Activated CD8-positive, alpha-beta memory T cell treated with anti-CD3 and anti-CD28 coated beads, Interleukin-2, amount 10 ng/mL, durations not matched to agents 7 days and 5 days (primary cell): ENCODE measurements at regions of chr2 and their contacts with region 1.

Region 1: DNA sequence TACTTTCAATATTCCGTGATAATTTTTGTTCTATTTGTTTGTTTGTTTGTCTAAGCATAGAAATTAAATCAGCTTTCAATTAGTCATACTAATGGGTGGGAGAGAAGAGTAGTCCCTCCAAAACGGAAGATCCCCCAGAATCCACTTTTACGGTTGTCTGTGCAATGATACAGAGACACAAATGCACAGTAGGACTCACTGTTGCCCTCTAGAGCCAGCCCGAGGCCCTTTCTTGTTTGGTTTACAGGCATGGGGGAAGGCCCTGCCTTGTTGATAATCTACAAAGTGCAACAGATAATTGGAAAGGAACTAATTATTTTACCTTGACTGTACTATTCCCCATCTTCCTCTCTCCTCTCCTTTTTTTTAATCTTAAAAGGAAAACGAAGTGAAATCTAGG is 121.1 kb downstream of the ACOXL start:
- DNase-seq: peak; percentile 83
- ATAC-seq: peak; percentile 50
- H3K4me3 Mint-ChIP-seq: no peak overlapping the region
- H3K27ac Mint-ChIP-seq: peak overlapping the region; percentile 82
- H3K4me1 Mint-ChIP-seq: peaks cover 75% of the 10 kb centered on the region
- H3K27me3 Mint-ChIP-seq: peaks cover 47% of the 10 kb centered on the region

Region 2: GRCh38 chr2:110688594-110689091 is 164.9 kb before region 1 on chr2:
- CTCF ChIA-PET with region 1: no interaction called
- DNase-seq: no peak
- ATAC-seq: no peak
- H3K4me3 Mint-ChIP-seq: no peak overlapping the region
- H3K27ac Mint-ChIP-seq: no peak overlapping the region
- H3K4me1 Mint-ChIP-seq: no peaks in the 10 kb centered on the region
- H3K27me3 Mint-ChIP-seq: peaks cover 26% of the 10 kb centered on the region

Region 3: DNA sequence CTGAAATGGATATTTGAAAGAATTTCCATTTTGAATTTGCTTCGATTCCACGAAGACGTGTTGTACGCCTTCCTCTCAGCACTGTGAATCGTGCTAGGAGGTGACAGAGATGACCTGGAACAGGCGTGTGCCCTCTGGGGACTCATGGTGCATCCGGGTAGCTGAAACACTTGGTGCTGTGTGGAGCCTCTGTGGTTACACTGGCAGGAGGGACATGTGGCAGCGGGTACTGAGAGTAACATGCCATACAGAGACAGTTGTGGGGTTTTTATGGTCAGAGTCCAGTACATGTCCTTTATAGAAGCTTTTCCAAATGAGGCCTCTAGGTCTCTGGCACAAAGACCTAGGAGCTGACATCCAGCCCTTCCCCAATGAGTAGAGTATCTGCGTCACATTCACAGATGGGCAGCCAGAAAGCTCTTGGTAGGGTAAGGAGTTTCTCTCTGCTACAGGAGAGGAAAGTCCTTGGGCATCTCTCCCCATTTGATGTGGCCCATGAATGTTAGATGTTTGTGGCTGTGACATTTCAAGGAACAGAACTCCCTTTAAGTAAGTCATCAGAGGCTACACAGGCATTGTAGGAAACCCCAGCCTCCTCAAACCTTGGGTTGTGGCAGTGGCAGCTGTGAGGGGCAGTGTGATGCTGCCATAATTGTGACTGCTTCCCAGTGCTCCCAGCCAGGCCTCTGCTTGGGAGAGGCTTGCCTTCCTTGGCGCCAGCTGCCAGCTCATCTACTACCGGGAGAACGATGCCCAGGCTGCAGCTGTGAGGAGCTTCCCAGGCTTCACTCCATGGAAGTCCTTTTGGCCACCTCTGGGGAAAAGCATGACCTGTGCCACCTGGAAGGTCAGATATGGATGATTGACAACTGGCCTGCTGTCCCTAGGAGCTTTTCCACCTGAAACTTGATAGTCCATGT is 40.5 kb before region 1 on chr2:
- CTCF ChIA-PET with region 1: interaction called, 35 read pairs
- DNase-seq: no peak
- ATAC-seq: no peak
- H3K4me3 Mint-ChIP-seq: no peak overlapping the region
- H3K27ac Mint-ChIP-seq: no peak overlapping the region
- H3K4me1 Mint-ChIP-seq: peaks cover 5% of the 10 kb centered on the region
- H3K27me3 Mint-ChIP-seq: peaks cover 58% of the 10 kb centered on the region

Region 4: GRCh38 chr2:110828330-110828729 is 25.2 kb before region 1 on chr2:
- CTCF ChIA-PET with region 1: no interaction called
- DNase-seq: no peak
- ATAC-seq: no peak
- H3K4me3 Mint-ChIP-seq: no peak overlapping the region
- H3K27ac Mint-ChIP-seq: no peak overlapping the region
- H3K4me1 Mint-ChIP-seq: peaks cover 2% of the 10 kb centered on the region
- H3K27me3 Mint-ChIP-seq: peaks cover 55% of the 10 kb centered on the region

Region 5: DNA sequence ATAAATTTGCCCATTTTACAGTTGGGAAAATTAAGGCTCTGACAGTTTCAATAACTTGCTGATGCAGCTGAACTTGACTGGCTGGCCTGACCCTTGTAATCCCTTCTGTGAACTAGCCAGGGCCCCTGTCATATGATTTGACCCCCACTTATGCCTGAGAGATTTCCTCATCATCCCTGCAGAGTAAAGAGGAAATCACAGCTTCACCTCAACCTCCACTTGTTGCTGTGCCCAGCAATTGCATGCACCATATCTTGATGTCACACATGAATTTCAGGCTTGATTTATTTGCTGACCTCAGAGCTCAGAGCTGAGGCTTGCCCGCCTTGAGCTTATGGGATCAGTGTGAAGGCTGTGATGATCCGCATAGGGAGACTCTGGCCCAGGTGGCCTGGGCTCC is 13.0 kb before region 1 on chr2:
- CTCF ChIA-PET with region 1: interaction called, 10 read pairs
- DNase-seq: no peak
- ATAC-seq: no peak
- H3K4me3 Mint-ChIP-seq: no peak overlapping the region
- H3K27ac Mint-ChIP-seq: no peak overlapping the region
- H3K4me1 Mint-ChIP-seq: peaks cover 19% of the 10 kb centered on the region
- H3K27me3 Mint-ChIP-seq: peaks cover 47% of the 10 kb centered on the region

Region 6: DNA sequence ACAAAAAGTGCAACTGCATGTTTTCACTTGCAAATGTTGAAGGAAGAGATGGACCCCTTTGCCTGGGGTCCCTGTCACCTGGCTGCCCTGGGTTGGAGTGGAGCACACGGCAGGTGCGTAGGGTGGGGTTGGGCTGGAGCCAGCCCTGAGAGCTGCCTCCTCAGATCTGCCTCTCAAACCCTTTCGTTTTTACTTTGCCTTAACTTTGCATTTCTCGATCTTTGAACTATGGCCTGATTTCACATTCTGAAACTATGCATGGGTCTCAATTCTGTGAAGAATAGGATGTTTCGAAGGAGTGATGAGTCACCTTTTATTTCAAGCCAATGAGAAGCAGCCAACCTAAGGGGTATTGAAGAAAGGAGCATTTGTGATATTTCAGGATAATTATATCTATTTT is 11.7 kb after region 1 on chr2:
- CTCF ChIA-PET with region 1: interaction called, 21 read pairs
- DNase-seq: peak; percentile 49
- ATAC-seq: peak; percentile 88
- H3K4me3 Mint-ChIP-seq: peak overlapping the region; percentile 38
- H3K27ac Mint-ChIP-seq: peak overlapping the region; percentile 83
- H3K4me1 Mint-ChIP-seq: peaks cover 73% of the 10 kb centered on the region
- H3K27me3 Mint-ChIP-seq: peaks cover 33% of the 10 kb centered on the region

Region 7: GRCh38 chr2:110874453-110875383 is 21.2 kb after region 1 on chr2:
- CTCF ChIA-PET with region 1: interaction called, 32 read pairs
- DNase-seq: no peak
- ATAC-seq: no peak
- H3K4me3 Mint-ChIP-seq: no peak overlapping the region
- H3K27ac Mint-ChIP-seq: no peak overlapping the region
- H3K4me1 Mint-ChIP-seq: peaks cover 52% of the 10 kb centered on the region
- H3K27me3 Mint-ChIP-seq: peaks cover 29% of the 10 kb centered on the region

Region 8: GRCh38 chr2:110948027-110948674 is 94.6 kb after region 1 on chr2:
- CTCF ChIA-PET with region 1: no interaction called
- DNase-seq: no peak
- ATAC-seq: no peak
- H3K4me3 Mint-ChIP-seq: no peak overlapping the region
- H3K27ac Mint-ChIP-seq: no peak overlapping the region
- H3K4me1 Mint-ChIP-seq: no peaks in the 10 kb centered on the region
- H3K27me3 Mint-ChIP-seq: peaks cover 26% of the 10 kb centered on the region